ENCODE measurements at regions of chr6 and their contacts with region 1.

Region 1: GRCh38 chr6:106339334-106340029 is 13.9 kb upstream of the ATG5 start:
- DNase-seq: peak; percentile 51
- ATAC-seq: peak; percentile 98
- H3K4me3 ChIP-seq: peak overlapping the region in 1 of 2 experiments; percentile 12; a peak in 1 of 4 replicates
- H3K27ac ChIP-seq: no peak overlapping the region
- H3K4me1 ChIP-seq: peaks cover 3% of the 10 kb centered on the region; the same call in 1 of the 2 replicates
- H3K27me3 ChIP-seq: no peaks in the 10 kb centered on the region; the same call in 1 of the 2 replicates
- CTCF ChIP-seq: peak; percentile 96

Region 2: DNA sequence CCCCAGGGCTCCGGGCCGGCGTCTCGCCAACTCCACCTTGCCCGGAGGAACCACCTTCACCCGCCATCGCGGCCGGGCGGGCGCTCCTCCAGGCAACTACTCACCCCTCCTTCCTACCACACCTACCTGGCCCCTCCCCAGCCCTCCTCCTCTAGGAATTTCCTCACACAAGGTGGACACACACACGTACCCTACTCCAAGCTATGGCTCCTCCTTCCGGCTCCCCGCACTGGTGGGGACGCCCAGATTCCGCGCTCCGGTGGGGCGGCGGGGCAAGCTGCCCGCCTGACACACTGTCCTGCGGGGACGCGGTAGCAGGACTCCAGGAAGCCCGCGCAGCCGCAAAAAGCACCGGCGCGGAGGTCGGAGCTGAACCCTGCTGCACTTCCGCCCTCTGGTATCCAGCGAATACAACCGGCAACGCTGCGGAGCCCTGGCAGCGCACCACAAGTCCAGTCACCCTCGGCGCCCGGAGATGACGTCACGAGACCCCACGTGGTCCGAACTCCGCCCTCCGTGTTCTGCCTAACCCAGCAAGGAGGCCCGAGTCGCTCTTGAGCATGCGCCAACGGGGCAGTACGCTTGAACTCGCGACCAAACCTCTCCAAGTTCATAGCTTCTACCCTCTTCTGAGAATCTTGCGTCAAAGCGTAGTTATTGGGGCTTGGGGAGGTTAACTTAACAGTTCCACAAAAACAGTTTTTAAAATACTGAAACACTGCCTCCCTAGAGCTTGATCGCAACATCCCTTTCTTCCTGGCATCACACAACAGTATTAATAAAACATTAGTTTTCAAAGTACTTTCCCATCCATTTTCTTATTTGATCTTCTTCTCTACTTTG is 13.9 kb before region 1 on chr6 and contains the start of gene ATG5:
- CTCF ChIA-PET with region 1: interaction called, 14 read pairs
- POLR2A ChIA-PET with region 1: interaction called, 4 read pairs
- in situ Hi-C with region 1: no loop called
- intact Hi-C with region 1: no loop called
- DNase-seq: peak; percentile 98
- ATAC-seq: peak; percentile 97
- H3K4me3 ChIP-seq: peak within 1 kb of the TSS; percentile 61 to 99
- H3K27ac ChIP-seq: peak within 1 kb of the TSS; percentile 98
- H3K4me1 ChIP-seq: peaks cover 10% of the 10 kb centered on the region
- H3K27me3 ChIP-seq: no peaks in the 10 kb centered on the region; the same call in 1 of the 2 replicates
- CTCF ChIP-seq: no peak
- total RNA-seq, gene ATG5: 51.4 TPM

Region 3: GRCh38 chr6:106444777-106445507 is 105.5 kb after region 1 on chr6:
- CTCF ChIA-PET with region 1: interaction called, 7 read pairs
- POLR2A ChIA-PET with region 1: no interaction called
- in situ Hi-C with region 1: no loop called
- intact Hi-C with region 1: loop called (anchors 1 kb)
- DNase-seq: peak; percentile 57
- ATAC-seq: peak; percentile 89
- H3K4me3 ChIP-seq: no peak overlapping the region
- H3K27ac ChIP-seq: no peak overlapping the region
- H3K4me1 ChIP-seq: no peaks in the 10 kb centered on the region
- H3K27me3 ChIP-seq: peaks cover 28% of the 10 kb centered on the region; the same call in 1 of the 2 replicates
- CTCF ChIP-seq: peak; percentile 85

Region 4: DNA sequence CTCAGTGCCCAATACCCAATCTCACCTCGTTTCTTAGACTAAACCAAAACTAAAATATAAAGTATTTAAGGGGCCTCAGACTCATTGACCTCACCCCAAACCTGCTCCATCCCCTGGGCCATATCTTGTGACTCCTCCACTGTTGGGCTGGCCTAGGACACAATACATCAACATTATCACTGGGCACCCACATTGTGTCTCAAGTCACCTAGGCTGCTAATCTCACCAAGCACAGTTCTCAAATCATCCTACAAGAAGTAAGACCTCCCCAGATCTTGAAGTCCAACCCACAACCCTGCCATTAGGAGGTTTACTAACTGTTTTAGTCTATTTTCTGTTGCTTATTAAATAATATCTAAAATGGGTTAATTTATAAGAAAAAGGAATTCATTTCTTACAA is 117.3 kb after region 1 on chr6:
- CTCF ChIA-PET with region 1: no interaction called
- POLR2A ChIA-PET with region 1: no interaction called
- in situ Hi-C with region 1: no loop called
- intact Hi-C with region 1: no loop called
- DNase-seq: no peak
- ATAC-seq: no peak
- H3K4me3 ChIP-seq: no peak overlapping the region
- H3K27ac ChIP-seq: no peak overlapping the region
- H3K4me1 ChIP-seq: no peaks in the 10 kb centered on the region
- H3K27me3 ChIP-seq: no peaks in the 10 kb centered on the region
- CTCF ChIP-seq: no peak

Region 5: GRCh38 chr6:106561686-106562405 is 222.4 kb after region 1 on chr6:
- CTCF ChIA-PET with region 1: interaction called, 10 read pairs
- POLR2A ChIA-PET with region 1: no interaction called
- in situ Hi-C with region 1: no loop called
- intact Hi-C with region 1: loop called (anchors 2 kb)
- DNase-seq: no peak
- ATAC-seq: no peak
- H3K4me3 ChIP-seq: no peak overlapping the region
- H3K27ac ChIP-seq: no peak overlapping the region
- H3K4me1 ChIP-seq: no peaks in the 10 kb centered on the region
- H3K27me3 ChIP-seq: no peaks in the 10 kb centered on the region
- CTCF ChIP-seq: no peak

Measured in Panc1 (cell line).